ENCODE measurements at regions of chr6 and their contacts with region 1.

Region 1: GRCh38 chr6:30489081-30490025 is at the start of gene HLA-E:
- DNase-seq: peak; percentile 98 to 99
- H3K4me3 ChIP-seq: peak within 1 kb of the TSS; percentile 99
- CTCF ChIP-seq: no peak
- POLR2A ChIP-seq: peak in 1 of 2 donors; percentile 97
- total RNA-seq, gene HLA-E: 685 to 929 (median 835) TPM

Region 2: DNA sequence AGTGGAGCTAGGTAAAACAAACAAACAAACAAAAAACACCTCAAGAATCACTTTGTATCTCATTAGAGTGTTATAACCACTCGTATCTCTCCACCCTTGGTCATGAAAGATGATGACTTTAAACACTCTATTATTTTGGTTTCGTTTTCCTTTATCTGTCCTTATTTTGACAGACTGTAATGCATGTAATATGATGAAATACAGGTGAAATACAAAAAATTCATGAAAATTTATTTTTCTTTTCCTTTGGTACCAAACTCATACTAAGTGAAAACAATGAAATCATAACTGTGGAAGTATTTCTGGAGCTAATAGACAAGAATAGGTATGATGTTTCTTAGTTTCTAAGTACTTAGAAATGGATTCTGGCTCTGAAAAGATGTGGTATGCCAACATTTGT is 1089.8 kb before region 1 on chr6:
- intact Hi-C with region 1: no loop called
- DNase-seq: no peak
- H3K4me3 ChIP-seq: no peak overlapping the region
- CTCF ChIP-seq: no peak
- POLR2A ChIP-seq: no peak

Region 3: GRCh38 chr6:30061092-30061857 is 428.1 kb before region 1 on chr6 and contains the start of gene POLR1H:
- intact Hi-C with region 1: no loop called
- DNase-seq: peak; percentile 94 to 98
- H3K4me3 ChIP-seq: peak within 1 kb of the TSS; percentile 82
- CTCF ChIP-seq: peak in 1 of 3 donors; percentile 7
- POLR2A ChIP-seq: peak in 1 of 2 donors; percentile 12
- total RNA-seq, gene POLR1H: 27.4 to 37.8 (median 33.6) TPM

Region 4: DNA sequence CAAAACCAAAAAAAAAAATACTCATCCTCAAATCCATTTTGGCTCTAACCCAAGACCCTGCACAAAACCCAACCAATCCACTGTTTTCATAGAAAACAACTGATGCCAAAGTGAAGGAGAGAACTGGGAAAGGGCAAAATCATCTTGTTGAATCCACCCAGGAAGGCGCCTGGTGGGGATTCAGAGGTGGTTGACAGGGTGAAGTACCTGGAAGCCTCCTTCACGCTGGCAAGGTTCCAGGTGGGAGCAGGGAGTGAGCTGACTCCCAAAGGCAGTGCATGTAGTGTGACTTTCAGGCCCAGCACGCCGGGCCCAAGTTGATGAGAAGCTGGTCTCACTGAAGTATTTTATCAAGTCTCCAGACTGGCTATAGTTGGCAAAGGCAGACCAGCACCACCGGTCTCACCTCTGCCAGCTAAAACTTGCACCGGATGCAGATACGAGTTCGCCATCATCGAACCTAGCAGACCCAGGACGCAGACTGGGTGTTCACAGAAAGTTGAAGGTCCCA is 111.2 kb after region 1 on chr6:
- intact Hi-C with region 1: loop called (anchors 10 kb)
- DNase-seq: no peak
- H3K4me3 ChIP-seq: no peak overlapping the region
- CTCF ChIP-seq: no peak
- POLR2A ChIP-seq: no peak

Measured in lower leg skin (tissue), 4 donors.